CD4-positive, alpha-beta T cell (primary cell): ENCODE measurements at regions of chr4 and their contacts with region 1.

Region 1: DNA sequence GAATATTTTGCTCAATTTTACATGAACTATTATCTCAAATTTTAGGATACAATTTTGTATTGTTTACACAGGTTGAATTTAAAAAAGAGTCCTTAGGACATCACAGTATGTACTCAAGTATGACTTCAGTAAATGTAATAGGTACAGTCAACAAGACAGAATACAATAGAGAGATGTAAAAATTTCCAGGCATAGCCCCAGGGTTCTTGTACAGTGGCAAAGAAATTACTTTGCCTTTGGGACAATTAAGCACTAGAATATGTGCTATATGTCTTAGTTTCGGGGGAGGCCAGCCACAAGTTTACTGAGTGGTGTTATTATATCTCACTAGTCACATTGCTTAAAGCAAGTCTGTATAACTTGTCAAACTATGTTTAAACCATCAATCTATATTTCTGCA is 1471.5 kb downstream of the PCDH18 start:
- DNase-seq: no peak
- ATAC-seq: no peak
- H3K4me3 ChIP-seq: no peak overlapping the region
- H3K4me3 Mint-ChIP-seq: no peak overlapping the region
- H3K27ac ChIP-seq: no peak overlapping the region
- H3K27ac Mint-ChIP-seq: no peak overlapping the region
- H3K4me1 ChIP-seq: no peaks in the 10 kb centered on the region
- H3K4me1 Mint-ChIP-seq: no peaks in the 10 kb centered on the region
- H3K27me3 ChIP-seq: no peaks in the 10 kb centered on the region
- H3K27me3 Mint-ChIP-seq: no peaks in the 10 kb centered on the region
- CTCF ChIP-seq: no peak

Region 2: GRCh38 chr4:136078976-136079375 is 18.2 kb after region 1 on chr4:
- CTCF ChIA-PET with region 1: no interaction called
- POLR2A ChIA-PET with region 1: no interaction called
- intact Hi-C with region 1: loop called in 1 of 2 experiments (anchors 1 kb)
- DNase-seq: no peak
- ATAC-seq: no peak
- H3K4me3 ChIP-seq: no peak overlapping the region
- H3K4me3 Mint-ChIP-seq: no peak overlapping the region
- H3K27ac ChIP-seq: no peak overlapping the region
- H3K27ac Mint-ChIP-seq: no peak overlapping the region
- H3K4me1 ChIP-seq: no peaks in the 10 kb centered on the region
- H3K4me1 Mint-ChIP-seq: no peaks in the 10 kb centered on the region
- H3K27me3 ChIP-seq: no peaks in the 10 kb centered on the region
- H3K27me3 Mint-ChIP-seq: no peaks in the 10 kb centered on the region
- CTCF ChIP-seq: no peak